ENCODE measurements at regions of chr4 and their contacts with region 1.

Region 1: DNA sequence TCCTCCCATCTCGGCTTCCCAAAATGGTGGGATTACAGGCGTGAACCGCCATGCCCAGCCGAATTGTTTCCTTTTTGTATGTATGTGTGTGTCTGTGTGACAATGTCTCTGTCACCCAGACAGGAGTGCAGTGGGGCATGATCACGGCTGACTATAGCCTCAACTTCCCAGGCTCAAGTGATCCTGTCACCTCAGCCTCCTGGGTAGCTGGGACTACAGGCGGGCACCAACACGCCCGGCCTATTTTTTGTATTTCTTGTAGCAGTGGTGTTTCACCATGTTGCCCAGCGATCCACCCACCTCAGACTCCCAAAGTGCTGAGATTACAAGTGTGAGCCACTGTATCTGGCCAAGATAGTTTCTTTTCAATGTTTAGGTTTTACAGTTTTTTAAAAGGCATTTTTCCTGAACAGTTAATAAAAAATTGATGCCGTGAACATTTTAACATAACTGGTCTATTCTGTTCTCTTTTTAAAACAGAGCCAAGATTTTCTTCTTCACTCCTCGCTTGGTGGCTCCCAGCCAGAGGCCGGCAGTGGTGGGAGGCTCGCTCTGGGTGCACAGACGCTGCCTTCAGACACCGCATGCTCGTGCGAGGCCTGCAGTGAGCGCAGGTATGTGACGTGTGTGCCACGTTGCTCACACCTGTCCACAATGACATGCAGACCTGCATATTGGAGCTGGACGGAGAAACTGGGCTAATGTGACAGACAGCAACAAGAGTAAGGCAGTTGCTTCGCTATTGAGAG is 88.5 kb downstream of the FAM193A start:
- DNase-seq: peak in 1 of 2 donors; percentile 54
- H3K4me3 ChIP-seq: no peak overlapping the region
- CTCF ChIP-seq: no peak
- POLR2A ChIP-seq: no peak

Region 2: GRCh38 chr4:2226261-2226660 is 398.7 kb before region 1 on chr4:
- intact Hi-C with region 1: loop called (anchors 5 kb)
- DNase-seq: no peak
- H3K4me3 ChIP-seq: no peak overlapping the region
- CTCF ChIP-seq: no peak
- POLR2A ChIP-seq: no peak